Activated naive CD4-positive, alpha-beta T cell treated with anti-CD3 and anti-CD28 coated beads, Interleukin-2, amount 10 ng/mL, durations not matched to agents 7 days and 5 days (primary cell): ENCODE measurements at regions of chr3 and their contacts with region 1.

Region 1: DNA sequence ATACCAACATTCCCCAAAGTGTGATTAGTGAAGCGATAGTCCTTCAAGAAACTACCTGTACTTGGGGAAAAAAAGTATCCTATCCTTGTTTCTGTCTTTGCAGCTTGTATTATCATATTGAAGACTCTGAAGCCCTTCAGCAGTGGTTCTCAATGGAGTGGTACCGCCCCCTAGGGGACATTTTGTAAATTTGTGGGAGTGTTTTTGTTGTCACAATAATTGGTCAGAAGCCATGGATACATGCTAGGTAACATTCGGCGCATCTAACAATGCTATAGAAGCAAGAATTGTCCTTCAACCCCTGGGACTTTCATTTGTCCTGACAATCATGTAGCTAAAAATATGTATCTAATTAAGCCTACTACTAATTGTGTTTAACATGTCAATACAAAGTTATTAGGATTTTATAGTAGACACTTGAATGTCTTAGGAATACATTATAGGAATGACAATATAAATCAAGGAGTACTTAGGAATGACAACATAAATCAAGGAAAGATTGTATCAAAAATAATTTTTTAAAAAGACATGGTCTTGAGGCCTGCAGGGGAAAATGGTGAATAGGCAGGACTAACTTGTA is 53.7 kb downstream of the NMD3 start:
- DNase-seq: peak; percentile 60
- H3K4me3 Mint-ChIP-seq: no peak overlapping the region
- H3K27ac Mint-ChIP-seq: no peak overlapping the region
- H3K4me1 Mint-ChIP-seq: no peaks in the 10 kb centered on the region
- H3K27me3 Mint-ChIP-seq: no peaks in the 10 kb centered on the region

Region 2: GRCh38 chr3:160941885-160942494 is 332.8 kb before region 1 on chr3:
- CTCF ChIA-PET with region 1: interaction called, 13 read pairs
- DNase-seq: peak; percentile 79
- H3K4me3 Mint-ChIP-seq: no peak overlapping the region
- H3K27ac Mint-ChIP-seq: no peak overlapping the region
- H3K4me1 Mint-ChIP-seq: no peaks in the 10 kb centered on the region
- H3K27me3 Mint-ChIP-seq: no peaks in the 10 kb centered on the region

Region 3: GRCh38 chr3:160956806-160957205 is 318.0 kb before region 1 on chr3:
- CTCF ChIA-PET with region 1: interaction called, 16 read pairs
- DNase-seq: no peak
- H3K4me3 Mint-ChIP-seq: no peak overlapping the region
- H3K27ac Mint-ChIP-seq: no peak overlapping the region
- H3K4me1 Mint-ChIP-seq: no peaks in the 10 kb centered on the region
- H3K27me3 Mint-ChIP-seq: peaks cover 3% of the 10 kb centered on the region

Region 4: GRCh38 chr3:161096771-161097355 is 177.9 kb before region 1 on chr3:
- CTCF ChIA-PET with region 1: interaction called, 12 read pairs
- DNase-seq: peak; percentile 51
- H3K4me3 Mint-ChIP-seq: no peak overlapping the region
- H3K27ac Mint-ChIP-seq: no peak overlapping the region
- H3K4me1 Mint-ChIP-seq: no peaks in the 10 kb centered on the region
- H3K27me3 Mint-ChIP-seq: peaks cover 8% of the 10 kb centered on the region

Region 5: DNA sequence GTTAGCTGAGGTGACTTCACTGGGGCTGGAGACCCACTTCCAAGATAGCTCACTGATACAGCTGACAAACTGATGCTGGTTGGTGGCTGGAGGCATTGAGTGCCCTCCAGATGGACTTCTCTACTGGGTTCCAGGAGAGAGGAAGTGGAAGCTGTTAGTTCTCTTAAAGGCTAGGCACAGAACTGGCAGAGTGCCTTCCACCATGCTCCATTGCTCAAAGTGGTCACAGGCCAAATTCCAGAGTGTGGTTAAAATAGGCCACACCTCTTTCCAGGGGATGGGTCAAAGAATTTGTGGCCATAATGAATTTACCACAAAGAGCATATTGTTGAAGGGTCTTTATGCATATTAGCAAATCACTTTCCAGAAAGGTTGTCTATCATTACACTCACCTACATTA is 20.5 kb after region 1 on chr3:
- CTCF ChIA-PET with region 1: interaction called, 11 read pairs
- DNase-seq: no peak
- H3K4me3 Mint-ChIP-seq: no peak overlapping the region
- H3K27ac Mint-ChIP-seq: no peak overlapping the region
- H3K4me1 Mint-ChIP-seq: no peaks in the 10 kb centered on the region
- H3K27me3 Mint-ChIP-seq: peaks cover 31% of the 10 kb centered on the region

Region 6: GRCh38 chr3:161409069-161409468 is 134.3 kb after region 1 on chr3:
- CTCF ChIA-PET with region 1: interaction called, 32 read pairs
- DNase-seq: peak; percentile 57
- H3K4me3 Mint-ChIP-seq: no peak overlapping the region
- H3K27ac Mint-ChIP-seq: no peak overlapping the region
- H3K4me1 Mint-ChIP-seq: peaks cover 25% of the 10 kb centered on the region
- H3K27me3 Mint-ChIP-seq: peaks cover 60% of the 10 kb centered on the region

Region 7: GRCh38 chr3:161423911-161424522 is 149.2 kb after region 1 on chr3:
- CTCF ChIA-PET with region 1: interaction called, 36 read pairs
- DNase-seq: no peak
- H3K4me3 Mint-ChIP-seq: no peak overlapping the region
- H3K27ac Mint-ChIP-seq: no peak overlapping the region
- H3K4me1 Mint-ChIP-seq: peaks cover 10% of the 10 kb centered on the region
- H3K27me3 Mint-ChIP-seq: peaks cover 22% of the 10 kb centered on the region